ENCODE measurements at regions of chr2 and their contacts with region 1.

Region 1: DNA sequence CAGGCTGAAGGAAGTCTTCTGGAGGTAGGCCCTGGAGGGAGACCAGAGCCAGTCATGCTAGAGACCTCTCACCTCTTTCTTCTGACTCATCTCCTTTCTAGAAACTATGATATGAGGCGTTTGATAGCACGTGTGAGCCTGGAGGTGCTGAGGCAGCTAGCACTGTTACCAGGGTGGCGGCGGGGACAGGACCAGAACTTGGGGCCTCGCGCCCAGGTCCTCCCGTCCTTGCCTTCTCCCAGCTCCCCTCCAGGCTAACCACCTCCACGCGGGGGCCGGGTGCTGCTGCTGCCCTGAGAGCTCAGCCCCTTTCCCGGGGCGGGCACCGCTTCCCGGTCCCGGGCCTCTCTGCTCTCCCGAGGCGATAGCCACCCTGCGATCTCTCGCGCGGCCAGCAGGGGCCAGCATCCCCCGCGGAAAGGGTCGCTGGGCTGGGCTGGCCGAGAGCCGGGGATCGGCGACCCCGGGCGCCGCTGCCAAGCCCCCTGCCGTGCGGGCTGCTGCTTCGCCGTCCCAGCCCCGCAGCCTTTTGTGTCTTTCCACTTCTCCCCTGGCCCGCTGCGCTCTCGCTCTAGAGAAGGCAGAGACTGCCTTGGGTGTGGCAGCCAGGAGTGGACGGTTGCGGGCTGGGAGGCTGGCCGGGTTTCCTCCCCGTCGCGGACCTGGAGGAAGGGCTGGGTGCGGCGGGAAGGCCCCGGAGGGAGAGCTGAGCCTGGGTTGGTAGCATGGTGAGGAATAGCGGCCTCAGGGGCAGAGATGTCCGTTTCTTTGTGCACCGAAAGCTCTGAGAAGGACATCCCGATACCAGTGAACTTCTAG is 49.1 kb downstream of the TMEM17 start:
- DNase-seq: peak; percentile 44 to 99
- H3K4me3 ChIP-seq: peak overlapping the region; percentile 22 to 61 (median 46)
- H3K27ac ChIP-seq: no peak overlapping the region
- H3K4me1 ChIP-seq: peaks cover 5 to 9% (median 7%) of the 10 kb centered on the region in 4 experiments
- H3K27me3 ChIP-seq: peaks cover 0 to 6% (median 0%) of the 10 kb centered on the region in 4 experiments; a peak in 3 of 7 replicates
- CTCF ChIP-seq: peak; percentile 80 to 91 (median 90)
- EP300 ChIP-seq: no peak
- POLR2A ChIP-seq: peak in 1 of 2 experiments; percentile 37; a peak in 1 of 3 replicates
- RAD21 ChIP-seq: peak; percentile 99

Region 2: GRCh38 chr2:62435720-62436119 is 21.2 kb before region 1 on chr2:
- CTCF ChIA-PET with region 1: interaction called, 11 read pairs
- POLR2A ChIA-PET with region 1: no interaction called
- DNase-seq: no peak
- H3K4me3 ChIP-seq: no peak overlapping the region
- H3K27ac ChIP-seq: no peak overlapping the region
- H3K4me1 ChIP-seq: no peaks in the 10 kb centered on the region
- H3K27me3 ChIP-seq: no peaks in the 10 kb centered on the region
- CTCF ChIP-seq: no peak
- EP300 ChIP-seq: no peak
- POLR2A ChIP-seq: no peak
- RAD21 ChIP-seq: no peak

Region 3: GRCh38 chr2:62475172-62476011 is 18.5 kb after region 1 on chr2:
- CTCF ChIA-PET with region 1: interaction called, 20 read pairs
- POLR2A ChIA-PET with region 1: interaction called, 4 read pairs
- DNase-seq: no peak
- H3K4me3 ChIP-seq: no peak overlapping the region
- H3K27ac ChIP-seq: 0 out of 2 replicates have a peak overlapping the region, but pooled peaks have one; percentile 11
- H3K4me1 ChIP-seq: peaks cover 7 to 17% (median 11%) of the 10 kb centered on the region in 4 experiments
- H3K27me3 ChIP-seq: no peaks in the 10 kb centered on the region
- CTCF ChIP-seq: no peak
- EP300 ChIP-seq: no peak
- POLR2A ChIP-seq: no peak
- RAD21 ChIP-seq: no peak

Region 4: DNA sequence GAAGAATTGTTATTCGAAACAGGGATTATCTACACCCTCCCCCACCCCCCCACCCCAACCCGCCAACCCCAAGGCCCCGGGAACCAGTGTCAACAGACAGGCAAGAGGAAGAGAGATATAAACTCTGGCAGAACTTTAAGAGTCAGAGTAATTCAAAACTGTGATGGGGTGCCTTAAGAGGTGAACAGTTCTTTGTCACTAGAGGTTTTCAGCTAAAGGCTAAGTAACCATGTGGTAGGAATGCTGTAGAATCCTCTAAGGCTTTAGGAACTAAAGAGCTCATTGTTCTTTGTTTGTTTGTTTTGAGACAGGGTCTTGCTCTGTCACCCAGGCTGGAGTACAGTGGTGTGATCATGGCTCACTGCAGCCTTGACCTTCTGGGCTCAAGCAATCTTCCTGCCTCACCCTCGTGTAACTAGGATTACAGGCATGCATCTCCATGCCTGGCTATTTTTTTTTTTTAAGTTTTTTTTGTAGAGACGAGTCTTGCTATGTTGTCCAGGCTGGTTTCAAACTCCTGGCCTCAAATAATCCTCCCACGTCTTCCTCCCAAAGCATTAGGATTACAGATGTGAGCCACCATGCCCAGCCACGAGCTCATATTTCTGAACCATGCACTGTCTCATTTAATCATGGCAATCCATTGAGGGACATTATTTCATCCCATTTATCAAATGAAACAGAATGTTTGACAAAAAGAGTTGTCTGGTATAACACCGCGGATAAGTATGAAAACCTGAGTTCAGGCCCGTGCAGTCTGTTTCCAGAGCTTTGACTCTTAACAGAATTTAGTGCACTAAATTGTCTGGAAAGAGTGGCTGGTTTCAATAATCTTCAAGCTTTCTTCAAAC is 69.8 kb after region 1 on chr2:
- CTCF ChIA-PET with region 1: interaction called, 14 read pairs
- POLR2A ChIA-PET with region 1: no interaction called
- DNase-seq: no peak
- H3K4me3 ChIP-seq: no peak overlapping the region
- H3K27ac ChIP-seq: peak overlapping the region; percentile 49; the same call in 1 of the 2 replicates
- H3K4me1 ChIP-seq: peaks cover 0 to 8% (median 4%) of the 10 kb centered on the region in 4 experiments; a peak in 2 of 7 replicates
- H3K27me3 ChIP-seq: no peaks in the 10 kb centered on the region
- CTCF ChIP-seq: no peak
- EP300 ChIP-seq: no peak
- POLR2A ChIP-seq: no peak
- RAD21 ChIP-seq: no peak

Region 5: DNA sequence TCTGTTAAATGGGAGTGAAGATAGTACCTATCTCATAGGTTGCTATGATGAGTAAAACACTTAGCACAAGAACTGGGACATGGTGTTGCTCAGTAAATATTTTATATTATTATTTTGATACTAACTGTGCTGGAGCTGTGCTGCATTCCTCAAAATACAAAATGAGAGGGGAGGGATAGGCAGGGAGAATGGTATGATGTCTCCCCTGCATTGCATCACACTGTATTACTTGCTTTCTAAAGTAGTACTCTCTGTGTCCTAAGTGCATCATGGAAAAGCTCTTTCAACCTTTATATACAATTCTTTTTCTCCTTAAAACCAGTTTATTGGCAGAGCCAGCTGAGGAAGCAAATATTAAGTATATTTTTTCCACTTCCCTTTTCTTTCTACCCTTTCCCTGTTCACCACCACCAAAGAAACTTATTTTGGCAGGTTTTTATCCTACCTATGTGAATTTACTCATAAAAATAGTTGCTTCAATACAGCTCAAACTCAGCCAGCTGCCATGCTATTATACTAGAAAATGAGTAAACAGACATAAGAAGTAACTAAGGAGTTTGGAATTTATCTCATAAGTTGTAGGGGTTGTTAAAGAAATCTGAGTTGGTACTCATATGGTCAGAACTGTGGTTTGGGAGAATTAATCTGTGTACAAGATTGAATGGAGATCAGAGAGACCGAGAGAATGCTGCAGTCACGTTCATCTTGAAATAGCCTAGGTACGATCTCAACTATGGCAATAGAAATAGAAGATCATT is 308.9 kb after region 1 on chr2:
- CTCF ChIA-PET with region 1: interaction called, 134 read pairs
- POLR2A ChIA-PET with region 1: no interaction called
- DNase-seq: no peak
- H3K4me3 ChIP-seq: no peak overlapping the region
- H3K27ac ChIP-seq: no peak overlapping the region
- H3K4me1 ChIP-seq: no peaks in the 10 kb centered on the region
- H3K27me3 ChIP-seq: no peaks in the 10 kb centered on the region
- CTCF ChIP-seq: no peak
- EP300 ChIP-seq: no peak
- POLR2A ChIP-seq: no peak
- RAD21 ChIP-seq: no peak

Region 6: DNA sequence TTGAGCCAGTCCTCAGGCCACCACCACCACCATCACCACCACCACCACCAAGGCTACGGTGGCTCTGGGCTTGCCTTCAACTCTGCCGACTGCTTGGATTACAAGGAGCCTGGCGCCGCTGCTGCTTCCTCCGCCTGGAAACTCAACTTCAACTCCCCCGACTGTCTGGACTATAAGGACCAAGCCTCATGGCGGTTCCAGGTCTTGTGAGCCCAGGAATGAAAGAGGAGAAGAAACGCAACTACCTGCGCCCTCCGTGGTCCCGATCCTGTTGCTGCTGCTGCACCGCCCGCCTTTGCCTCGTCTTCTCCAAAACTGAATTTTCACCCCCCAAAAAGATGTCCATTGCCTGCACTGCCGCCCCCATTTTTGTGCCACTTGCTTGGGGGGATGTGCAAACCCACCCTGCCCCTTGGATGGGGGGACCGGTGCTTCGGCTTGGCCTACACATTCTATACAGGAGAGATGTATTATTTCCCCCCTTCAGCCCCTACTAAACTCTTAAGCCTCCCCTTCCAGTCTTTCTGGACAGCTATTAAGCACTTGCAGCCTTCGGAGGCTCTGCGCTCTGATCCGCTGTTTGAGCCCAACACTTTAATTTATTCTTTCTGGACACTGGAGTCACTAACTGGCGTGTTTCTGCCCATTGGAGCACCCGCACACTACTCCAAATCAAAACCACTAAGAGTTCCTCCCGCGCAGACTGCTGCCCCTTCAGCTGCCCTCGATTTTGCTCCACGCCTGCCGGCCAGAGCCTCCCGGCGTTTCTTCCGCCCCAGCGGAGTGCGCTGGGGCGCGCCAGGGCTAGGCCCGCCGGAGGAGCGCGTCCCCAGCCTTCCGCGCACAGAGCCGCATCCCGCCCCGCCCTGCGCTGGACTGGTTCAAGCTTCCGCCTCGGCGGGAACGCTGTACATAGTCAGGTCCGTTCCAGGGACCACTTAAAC is 599.4 kb after region 1 on chr2:
- CTCF ChIA-PET with region 1: interaction called, 12 read pairs
- POLR2A ChIA-PET with region 1: interaction called, 3 read pairs
- DNase-seq: peak in 1 of 2 experiments; percentile 56
- H3K4me3 ChIP-seq: peak overlapping the region in 2 of 4 experiments; percentile 7 to 74; a peak in 5 of 8 replicates
- H3K27ac ChIP-seq: no peak overlapping the region
- H3K4me1 ChIP-seq: peaks cover 9 to 60% (median 48%) of the 10 kb centered on the region in 4 experiments
- H3K27me3 ChIP-seq: peaks cover 74 to 99% (median 93%) of the 10 kb centered on the region in 4 experiments
- CTCF ChIP-seq: peak in 1 of 3 experiments; percentile 3; a peak in 1 of 4 replicates
- EP300 ChIP-seq: no peak
- POLR2A ChIP-seq: no peak
- RAD21 ChIP-seq: no peak

Measured in H1 (cell line).